ENCODE measurements at regions of chr9 and their contacts with region 1.

Region 1: DNA sequence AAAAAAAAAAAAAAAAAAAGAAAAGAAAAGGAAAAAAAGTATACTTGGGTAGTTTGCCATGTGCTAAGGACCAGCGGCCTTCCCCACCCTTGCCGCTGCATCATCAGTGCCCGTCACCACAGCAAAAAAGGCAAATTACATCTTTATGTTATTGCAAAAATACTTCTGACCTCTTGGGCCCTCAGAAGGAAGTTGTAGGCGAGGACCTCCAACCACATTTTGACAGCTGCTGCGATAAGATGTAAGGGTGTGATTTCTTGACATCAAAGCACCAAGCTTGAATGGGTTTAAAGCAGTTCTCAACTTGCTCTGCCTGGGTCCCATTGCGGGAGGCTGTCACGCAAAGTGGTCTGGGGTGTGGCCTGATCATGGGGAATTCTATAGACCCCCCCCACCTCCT is 39.2 kb downstream of the DMRT1 start:
- DNase-seq: peak; percentile 18 to 55 (median 23)
- H3K4me3 ChIP-seq: no peak overlapping the region
- H3K27ac ChIP-seq: no peak overlapping the region
- H3K4me1 ChIP-seq: no peaks in the 10 kb centered on the region
- H3K27me3 ChIP-seq: peaks cover 9 to 78% (median 14%) of the 10 kb centered on the region in 5 experiments

Region 2: DNA sequence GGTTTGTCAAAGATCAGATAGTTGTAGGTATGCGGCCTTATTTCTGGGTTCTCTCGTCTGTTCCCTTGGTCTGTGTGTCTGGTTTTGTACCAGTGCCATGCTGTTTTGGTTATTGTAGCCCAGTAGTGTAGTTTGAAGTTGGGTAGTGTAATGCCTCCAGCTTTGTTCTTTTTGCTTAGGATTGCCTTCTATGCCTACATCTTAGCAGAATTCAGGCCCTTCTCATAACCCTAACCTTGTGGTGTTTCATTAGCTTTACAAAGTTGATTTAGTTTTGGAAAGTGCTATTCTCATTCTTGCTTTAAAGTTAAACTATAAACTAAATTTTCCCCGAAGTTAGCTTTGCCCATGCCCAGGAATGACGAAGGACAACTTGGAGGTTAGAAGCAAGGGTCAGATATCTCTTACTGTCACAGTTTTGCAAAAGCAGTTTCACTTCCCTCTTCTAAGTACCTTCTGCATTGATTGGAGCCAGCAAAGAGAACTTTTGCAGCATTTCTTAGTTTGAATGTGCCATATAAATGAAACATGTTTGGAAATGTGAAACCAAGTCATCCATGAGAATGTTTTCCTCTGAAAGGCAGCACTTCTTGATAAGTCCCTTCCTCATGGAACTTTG is 313.5 kb before region 1 on chr9:
- CTCF ChIA-PET with region 1: no interaction called
- POLR2A ChIA-PET with region 1: no interaction called
- DNase-seq: no peak
- H3K4me3 ChIP-seq: no peak overlapping the region
- H3K27ac ChIP-seq: no peak overlapping the region
- H3K4me1 ChIP-seq: no peaks in the 10 kb centered on the region
- H3K27me3 ChIP-seq: no peaks in the 10 kb centered on the region

Region 3: DNA sequence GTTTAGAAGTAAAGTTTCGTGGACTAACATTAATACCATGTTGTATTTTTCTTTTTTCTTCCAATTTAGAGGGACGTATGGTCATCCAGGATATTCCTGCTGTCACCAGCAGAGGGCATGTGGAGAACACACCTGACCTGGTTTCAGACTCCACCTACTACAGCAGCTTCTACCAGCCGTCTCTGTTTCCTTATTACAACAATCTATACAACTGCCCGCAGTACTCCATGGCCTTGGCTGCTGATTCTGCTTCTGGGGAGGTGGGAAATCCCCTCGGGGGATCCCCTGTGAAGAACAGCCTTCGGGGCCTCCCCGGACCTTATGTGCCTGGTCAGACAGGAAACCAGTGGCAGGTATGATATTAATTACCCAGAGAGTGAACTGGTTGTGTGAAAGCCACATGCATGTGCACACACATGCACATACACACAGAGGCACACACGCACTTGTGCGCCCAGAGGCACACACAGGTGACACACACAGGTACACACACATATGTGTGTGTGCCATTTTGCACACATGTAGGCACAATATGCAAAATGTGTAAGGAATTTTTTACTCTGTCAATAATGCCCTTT is 13.2 kb after region 1 on chr9:
- CTCF ChIA-PET with region 1: interaction called, 14 read pairs
- POLR2A ChIA-PET with region 1: no interaction called
- DNase-seq: peak; percentile 67 to 90 (median 87)
- H3K4me3 ChIP-seq: peak overlapping the region in 2 of 7 experiments; percentile 20 to 29
- H3K27ac ChIP-seq: no peak overlapping the region
- H3K4me1 ChIP-seq: peaks cover 0 to 11% (median 3%) of the 10 kb centered on the region in 4 experiments
- H3K27me3 ChIP-seq: peaks cover 0 to 23% (median 10%) of the 10 kb centered on the region in 5 experiments